Activated T-helper 1 cell treated with anti-CD3 and anti-CD28 coated beads, Interleukin-12 subunit alpha, Interleukin-12 subunit beta, Interleukin-2, Interleukin-4 antibody, amounts not matched to agents 30 ng/mL and 10 ng/mL and 1 ng/mL, durations not matched to agents 14 hours and 24 hours and 36 hours (primary cell): ENCODE measurements at regions of chr1 and their contacts with region 1.

Region 1: DNA sequence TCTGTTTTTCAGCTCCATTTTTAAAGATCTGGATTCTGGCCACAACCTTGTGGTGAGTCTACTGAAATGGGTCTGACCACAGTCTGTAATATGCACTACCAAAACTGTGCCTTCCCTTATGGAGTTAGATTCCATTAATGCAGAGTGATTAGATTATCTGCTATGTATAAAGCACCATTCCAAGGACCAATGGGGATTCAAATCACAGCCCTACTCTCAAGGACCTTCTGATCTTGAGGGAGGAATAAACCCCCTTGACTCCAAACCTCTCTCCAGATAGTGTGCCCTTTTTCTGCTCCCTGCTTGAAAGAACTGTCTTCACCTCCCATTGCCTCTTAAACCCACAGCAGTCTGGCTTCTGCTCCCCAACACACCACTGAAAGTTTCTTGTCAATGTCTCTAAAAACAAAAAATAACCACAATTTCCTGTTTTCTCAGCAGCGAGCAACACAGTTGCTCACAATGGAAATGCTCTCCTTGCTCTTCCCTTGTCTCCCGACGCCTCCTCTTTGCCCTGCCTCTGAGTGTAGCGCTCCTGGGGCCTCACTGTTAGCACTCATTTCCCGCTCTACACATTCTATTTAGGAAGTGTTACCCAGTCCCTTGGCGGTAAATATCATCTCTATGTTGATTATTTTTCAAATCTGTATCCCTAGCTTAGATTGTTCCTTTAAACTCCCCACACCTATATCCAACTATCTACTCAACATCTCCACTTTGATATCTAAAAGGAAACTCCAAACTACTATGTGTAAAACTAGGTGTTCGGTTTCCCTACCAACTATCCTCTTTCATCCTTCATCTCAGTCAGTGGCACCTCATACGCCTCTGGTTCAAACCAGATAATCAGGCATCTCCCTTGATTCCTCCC is 13.6 kb downstream of the PCNX2 start:
- DNase-seq: peak; percentile 31
- H3K4me3 Mint-ChIP-seq: peak overlapping the region; percentile 72
- H3K27ac Mint-ChIP-seq: peak overlapping the region; percentile 91
- H3K4me1 Mint-ChIP-seq: peaks cover 67% of the 10 kb centered on the region
- H3K27me3 Mint-ChIP-seq: no peaks in the 10 kb centered on the region

Region 2: GRCh38 chr1:233269656-233270055 is 12.3 kb before region 1 on chr1:
- intact Hi-C with region 1: loop called (anchors 1 kb)
- DNase-seq: no peak
- H3K4me3 Mint-ChIP-seq: no peak overlapping the region
- H3K27ac Mint-ChIP-seq: no peak overlapping the region
- H3K4me1 Mint-ChIP-seq: peaks cover 34% of the 10 kb centered on the region
- H3K27me3 Mint-ChIP-seq: no peaks in the 10 kb centered on the region

Region 3: GRCh38 chr1:233295237-233295974 is 13.5 kb after region 1 on chr1 and contains the start of gene PCNX2:
- intact Hi-C with region 1: loop called (anchors 1 kb)
- DNase-seq: peak; percentile 54
- H3K4me3 Mint-ChIP-seq: peak within 1 kb of the TSS; percentile 94
- H3K27ac Mint-ChIP-seq: peak within 1 kb of the TSS; percentile 86
- H3K4me1 Mint-ChIP-seq: peaks cover 37% of the 10 kb centered on the region
- H3K27me3 Mint-ChIP-seq: no peaks in the 10 kb centered on the region
- total RNA-seq, gene PCNX2: 33.1 and 33.7 TPM in 2 replicates